ENCODE measurements at regions of chrX and their contacts with region 1.

Region 1: GRCh38 chrX:63754860-63755582 is 30.0 kb downstream of the ARHGEF9 start:
- DNase-seq: peak; percentile 60 to 89 (median 86)
- ATAC-seq: peak; percentile 97
- H3K4me3 ChIP-seq: peak overlapping the region; percentile 91
- H3K4me3 Mint-ChIP-seq: peak overlapping the region; percentile 96 to 99 (median 98)
- H3K27ac ChIP-seq: peak overlapping the region; percentile 83
- H3K27ac Mint-ChIP-seq: peak overlapping the region; percentile 93 to 99 (median 97)
- H3K4me1 ChIP-seq: peaks cover 0 to 4% of the 10 kb centered on the region in 2 donors
- H3K4me1 Mint-ChIP-seq: peaks cover 11 to 43% (median 30%) of the 10 kb centered on the region in 7 donors
- H3K27me3 ChIP-seq: no peaks in the 10 kb centered on the region
- H3K27me3 Mint-ChIP-seq: no peaks in the 10 kb centered on the region

Region 2: DNA sequence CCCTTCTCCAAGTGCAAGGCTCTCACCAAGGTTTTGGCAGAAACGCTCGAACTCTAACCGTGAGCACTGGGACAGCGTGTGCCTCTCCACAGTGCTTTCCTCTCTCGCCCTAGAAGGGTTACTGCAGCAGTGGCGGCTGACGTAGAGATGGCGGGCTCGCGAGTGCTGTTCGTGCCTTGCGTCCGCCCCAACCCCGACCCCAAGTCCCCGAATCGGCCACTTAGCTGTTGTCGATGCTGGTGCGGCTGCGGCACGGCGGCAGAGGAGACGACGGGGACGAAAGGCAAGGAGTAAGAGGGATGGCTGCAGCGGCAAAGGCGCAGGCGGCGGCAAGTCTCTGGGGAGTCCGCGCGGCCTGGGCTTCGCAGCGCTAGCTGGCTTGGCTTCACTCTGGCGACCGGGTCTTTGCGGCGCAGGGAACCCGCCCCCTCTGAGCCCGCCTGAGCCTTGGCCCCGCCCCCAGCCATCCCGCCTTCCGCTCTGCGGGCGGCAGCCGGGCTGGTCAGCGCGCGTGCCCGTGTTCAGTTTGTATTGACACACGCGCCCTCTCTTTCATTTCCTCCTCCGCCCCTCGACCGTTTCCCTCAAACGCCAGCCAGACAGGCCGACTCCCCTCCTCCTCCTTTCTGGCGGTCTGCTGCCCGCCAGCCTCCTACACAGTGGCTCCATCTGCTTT is 403.9 kb before region 1 on chrX and contains the start of gene SPIN4:
- CTCF ChIA-PET with region 1: no interaction called
- POLR2A ChIA-PET with region 1: no interaction called
- intact Hi-C with region 1: loop called (anchors 2 to 5 kb)
- DNase-seq: peak; percentile 9 to 68 (median 18)
- ATAC-seq: peak; percentile 92
- H3K4me3 ChIP-seq: peak within 1 kb of the TSS; percentile 72
- H3K4me3 Mint-ChIP-seq: peak within 1 kb of the TSS; percentile 83 to 98 (median 89)
- H3K27ac ChIP-seq: peak within 1 kb of the TSS; percentile 48
- H3K27ac Mint-ChIP-seq: peak within 1 kb of the TSS in 8 of 9 donors; percentile 70 to 84 (median 81)
- H3K4me1 ChIP-seq: peaks cover 0 to 3% of the 10 kb centered on the region in 2 donors
- H3K4me1 Mint-ChIP-seq: peaks cover 4 to 35% (median 23%) of the 10 kb centered on the region in 7 donors
- H3K27me3 ChIP-seq: no peaks in the 10 kb centered on the region
- H3K27me3 Mint-ChIP-seq: no peaks in the 10 kb centered on the region
- total RNA-seq, gene SPIN4: 0.95 to 6.8 (median 1.9) TPM

Region 3: GRCh38 chrX:63560601-63561218 is 194.3 kb before region 1 on chrX:
- CTCF ChIA-PET with region 1: no interaction called
- POLR2A ChIA-PET with region 1: interaction called, 4 read pairs
- intact Hi-C with region 1: loop called (anchors 1 to 2 kb)
- DNase-seq: peak; percentile 7 to 71 (median 63)
- ATAC-seq: peak; percentile 89
- H3K4me3 ChIP-seq: peak overlapping the region; percentile 87
- H3K4me3 Mint-ChIP-seq: peak overlapping the region; percentile 93 to 100 (median 96)
- H3K27ac ChIP-seq: peak overlapping the region; percentile 59
- H3K27ac Mint-ChIP-seq: peak overlapping the region; percentile 86 to 97 (median 92)
- H3K4me1 ChIP-seq: peaks cover 0 to 4% of the 10 kb centered on the region in 2 donors
- H3K4me1 Mint-ChIP-seq: peaks cover 3 to 34% (median 20%) of the 10 kb centered on the region in 7 donors
- H3K27me3 ChIP-seq: no peaks in the 10 kb centered on the region
- H3K27me3 Mint-ChIP-seq: no peaks in the 10 kb centered on the region

Region 4: GRCh38 chrX:63657821-63658220 is 97.2 kb before region 1 on chrX:
- CTCF ChIA-PET with region 1: no interaction called
- POLR2A ChIA-PET with region 1: no interaction called
- intact Hi-C with region 1: no loop called
- DNase-seq: no peak
- ATAC-seq: no peak
- H3K4me3 ChIP-seq: no peak overlapping the region
- H3K4me3 Mint-ChIP-seq: no peak overlapping the region
- H3K27ac ChIP-seq: no peak overlapping the region
- H3K27ac Mint-ChIP-seq: no peak overlapping the region
- H3K4me1 ChIP-seq: no peaks in the 10 kb centered on the region
- H3K4me1 Mint-ChIP-seq: no peaks in the 10 kb centered on the region
- H3K27me3 ChIP-seq: no peaks in the 10 kb centered on the region
- H3K27me3 Mint-ChIP-seq: no peaks in the 10 kb centered on the region

Region 5: GRCh38 chrX:63686878-63687714 is 67.9 kb before region 1 on chrX:
- CTCF ChIA-PET with region 1: no interaction called
- POLR2A ChIA-PET with region 1: no interaction called
- intact Hi-C with region 1: loop called in 1 of 2 experiments (anchors 5 kb)
- DNase-seq: peak in 5 of 9 donors; percentile 1 to 31 (median 17)
- ATAC-seq: peak; percentile 46
- H3K4me3 ChIP-seq: no peak overlapping the region
- H3K4me3 Mint-ChIP-seq: no peak overlapping the region
- H3K27ac ChIP-seq: no peak overlapping the region
- H3K27ac Mint-ChIP-seq: no peak overlapping the region
- H3K4me1 ChIP-seq: no peaks in the 10 kb centered on the region
- H3K4me1 Mint-ChIP-seq: peaks cover 0 to 18% (median 0%) of the 10 kb centered on the region in 7 donors
- H3K27me3 ChIP-seq: no peaks in the 10 kb centered on the region
- H3K27me3 Mint-ChIP-seq: no peaks in the 10 kb centered on the region

Region 6: DNA sequence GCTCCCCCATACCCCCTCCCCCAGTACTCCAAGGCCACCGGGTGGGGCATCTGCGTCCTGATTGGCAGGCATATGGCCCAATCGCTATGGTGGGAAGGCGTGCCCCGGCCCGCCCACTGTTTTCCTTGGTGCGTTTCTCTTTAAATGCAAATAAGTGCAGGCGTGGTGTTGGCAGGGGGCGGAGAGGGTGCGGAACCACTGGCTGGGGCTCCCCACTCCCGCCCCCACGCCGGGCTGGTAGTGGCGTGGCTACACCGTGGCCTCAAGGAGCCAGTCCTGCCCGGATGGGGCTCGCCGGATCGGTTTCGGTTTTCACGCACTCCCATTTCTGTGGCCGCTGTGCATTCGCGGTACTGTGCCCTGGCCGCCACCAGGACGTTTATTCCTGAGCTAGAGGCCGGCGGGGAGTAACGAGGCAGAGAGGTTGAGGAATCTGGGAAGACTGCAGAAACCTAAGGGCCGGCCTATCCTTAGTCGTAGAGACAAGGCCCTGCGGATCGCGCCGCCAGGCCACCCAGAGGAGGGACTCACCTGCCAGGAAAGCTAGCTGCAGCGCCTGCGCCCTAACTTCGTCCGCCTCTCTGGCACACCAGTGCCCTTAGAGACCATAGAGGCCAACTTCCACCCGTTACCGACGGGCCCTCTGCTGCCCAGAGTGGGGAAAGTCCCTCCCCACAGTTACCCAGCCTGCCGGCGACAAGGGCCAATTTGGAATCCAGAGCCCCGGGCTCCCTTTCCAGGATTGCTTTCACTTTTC is 450.9 kb after region 1 on chrX:
- CTCF ChIA-PET with region 1: no interaction called
- POLR2A ChIA-PET with region 1: interaction called, 3 read pairs
- intact Hi-C with region 1: loop called (anchors 1 kb)
- DNase-seq: peak; percentile 70 to 88 (median 86)
- ATAC-seq: peak; percentile 95
- H3K4me3 ChIP-seq: peak overlapping the region; percentile 71
- H3K4me3 Mint-ChIP-seq: peak overlapping the region; percentile 83 to 94 (median 90)
- H3K27ac ChIP-seq: peak overlapping the region; percentile 77
- H3K27ac Mint-ChIP-seq: peak overlapping the region; percentile 82 to 95 (median 93)
- H3K4me1 ChIP-seq: peaks cover 6 to 7% of the 10 kb centered on the region in 2 donors
- H3K4me1 Mint-ChIP-seq: peaks cover 9 to 25% (median 13%) of the 10 kb centered on the region in 7 donors
- H3K27me3 ChIP-seq: no peaks in the 10 kb centered on the region
- H3K27me3 Mint-ChIP-seq: no peaks in the 10 kb centered on the region

Region 7: DNA sequence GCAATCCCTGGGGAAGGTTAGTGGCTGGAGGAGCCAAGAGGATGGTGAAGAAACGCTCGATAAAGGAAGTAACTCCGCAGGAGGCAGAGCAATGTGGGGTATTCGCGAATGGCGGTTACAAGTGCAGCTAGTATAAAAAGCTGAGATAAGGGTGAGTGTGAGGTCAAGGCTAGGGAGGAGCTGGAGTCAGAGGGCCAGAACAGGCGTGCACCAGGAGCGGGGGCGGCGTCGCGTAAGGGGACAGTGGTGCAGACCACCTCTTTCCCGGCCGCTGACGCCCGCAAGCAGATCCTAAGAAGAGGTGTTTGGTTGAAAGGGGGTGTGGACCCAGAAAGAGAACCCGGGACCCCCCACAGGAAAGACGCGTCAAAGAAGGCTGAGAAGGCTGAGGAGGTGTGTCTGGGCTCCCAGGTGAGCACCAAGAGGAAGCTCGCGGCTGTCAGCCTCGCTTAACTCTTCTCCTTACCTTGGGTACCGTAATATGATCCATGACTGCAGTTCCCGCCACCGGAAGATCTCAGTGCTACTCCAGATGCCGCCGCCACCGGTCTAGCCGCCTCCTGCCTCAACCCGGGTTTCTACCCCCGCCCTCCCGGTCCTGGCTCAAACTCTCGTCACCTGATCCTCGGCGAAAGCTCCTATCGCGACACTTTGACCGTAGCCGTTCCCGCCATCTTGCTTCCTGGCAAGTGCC is 640.0 kb after region 1 on chrX and contains the start of gene MTMR8:
- CTCF ChIA-PET with region 1: no interaction called
- POLR2A ChIA-PET with region 1: no interaction called
- intact Hi-C with region 1: loop called in 1 of 2 experiments (anchors 2 kb)
- DNase-seq: peak; percentile 58 to 83 (median 78)
- ATAC-seq: peak; percentile 94
- H3K4me3 ChIP-seq: peak within 1 kb of the TSS; percentile 66
- H3K4me3 Mint-ChIP-seq: peak within 1 kb of the TSS; percentile 89 to 98 (median 94)
- H3K27ac ChIP-seq: peak within 1 kb of the TSS; percentile 66
- H3K27ac Mint-ChIP-seq: peak within 1 kb of the TSS; percentile 83 to 94 (median 91)
- H3K4me1 ChIP-seq: no peaks in the 10 kb centered on the region
- H3K4me1 Mint-ChIP-seq: peaks cover 15 to 54% (median 45%) of the 10 kb centered on the region in 7 donors
- H3K27me3 ChIP-seq: no peaks in the 10 kb centered on the region
- H3K27me3 Mint-ChIP-seq: no peaks in the 10 kb centered on the region
- total RNA-seq, gene MTMR8: 4.7 to 9.4 (median 7.2) TPM

Region 8: GRCh38 chrX:65534450-65535292 is 1779.7 kb after region 1 on chrX and contains the start of gene LAS1L:
- CTCF ChIA-PET with region 1: no interaction called
- POLR2A ChIA-PET with region 1: no interaction called
- intact Hi-C with region 1: loop called (anchors 1 kb)
- DNase-seq: peak; percentile 71 to 94 (median 90)
- ATAC-seq: peak; percentile 99
- H3K4me3 ChIP-seq: peak within 1 kb of the TSS; percentile 96
- H3K4me3 Mint-ChIP-seq: peak within 1 kb of the TSS; percentile 97 to 100 (median 100)
- H3K27ac ChIP-seq: peak within 1 kb of the TSS; percentile 75
- H3K27ac Mint-ChIP-seq: peak within 1 kb of the TSS; percentile 94 to 100 (median 98)
- H3K4me1 ChIP-seq: peaks cover 10 to 13% of the 10 kb centered on the region in 2 donors
- H3K4me1 Mint-ChIP-seq: peaks cover 5 to 28% (median 16%) of the 10 kb centered on the region in 7 donors
- H3K27me3 ChIP-seq: no peaks in the 10 kb centered on the region
- H3K27me3 Mint-ChIP-seq: no peaks in the 10 kb centered on the region
- total RNA-seq, gene LAS1L: 37.2 to 48.9 (median 44.9) TPM